Activated CD8-positive, alpha-beta memory T cell treated with anti-CD3 and anti-CD28 coated beads, Interleukin-2, amount 10 ng/mL, durations not matched to agents 7 days and 5 days (primary cell): ENCODE measurements at regions of chr17 and their contacts with region 1.

Region 1: DNA sequence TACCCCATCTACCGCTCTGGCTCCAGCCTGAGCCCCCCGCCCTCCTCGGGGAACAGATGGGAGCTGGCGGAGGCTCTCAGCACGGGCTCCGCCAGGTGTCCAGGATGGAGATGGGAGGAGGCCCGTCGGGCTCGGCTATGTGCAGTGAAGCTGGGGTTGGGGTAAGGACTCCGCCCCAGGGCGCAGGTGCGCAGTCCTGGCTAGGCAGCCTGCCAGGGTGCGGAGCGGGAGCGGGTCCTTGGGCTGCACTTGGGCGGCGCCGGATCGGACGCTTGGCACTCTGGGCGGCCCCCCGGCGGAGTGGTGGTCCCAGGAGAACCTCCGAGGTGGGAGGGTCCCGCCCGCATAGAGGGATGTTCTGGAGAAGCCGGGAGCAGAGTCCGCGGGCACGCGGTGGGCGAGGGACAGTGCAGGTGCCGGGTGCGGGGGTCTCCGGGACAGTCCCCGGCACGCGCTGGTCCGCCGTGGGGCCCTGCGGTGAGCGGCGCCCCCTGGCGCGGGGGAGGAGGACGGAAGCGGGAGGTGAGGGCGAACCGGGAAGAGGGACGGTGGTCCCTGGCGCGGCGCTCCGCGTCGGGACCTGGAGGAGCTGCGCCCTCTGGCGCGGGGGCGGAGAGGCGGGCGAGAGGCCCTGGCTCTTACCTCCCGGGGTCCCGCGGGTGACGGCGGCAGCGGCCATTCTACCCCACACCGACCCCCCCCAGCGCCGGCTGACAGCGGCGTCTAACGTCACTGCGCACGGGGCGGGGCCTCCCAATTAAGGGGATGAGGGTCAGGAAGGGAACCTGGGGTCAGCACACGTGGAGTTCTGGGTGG is at the start of gene CAMTA2:
- DNase-seq: peak; percentile 93
- ATAC-seq: peak; percentile 88
- H3K4me3 Mint-ChIP-seq: peak within 1 kb of the TSS; percentile 91
- H3K27ac Mint-ChIP-seq: peak within 1 kb of the TSS; percentile 93
- H3K4me1 Mint-ChIP-seq: peaks cover 36% of the 10 kb centered on the region
- H3K27me3 Mint-ChIP-seq: no peaks in the 10 kb centered on the region
- total RNA-seq, gene CAMTA2: 60.6 to 72.5 TPM

Region 2: DNA sequence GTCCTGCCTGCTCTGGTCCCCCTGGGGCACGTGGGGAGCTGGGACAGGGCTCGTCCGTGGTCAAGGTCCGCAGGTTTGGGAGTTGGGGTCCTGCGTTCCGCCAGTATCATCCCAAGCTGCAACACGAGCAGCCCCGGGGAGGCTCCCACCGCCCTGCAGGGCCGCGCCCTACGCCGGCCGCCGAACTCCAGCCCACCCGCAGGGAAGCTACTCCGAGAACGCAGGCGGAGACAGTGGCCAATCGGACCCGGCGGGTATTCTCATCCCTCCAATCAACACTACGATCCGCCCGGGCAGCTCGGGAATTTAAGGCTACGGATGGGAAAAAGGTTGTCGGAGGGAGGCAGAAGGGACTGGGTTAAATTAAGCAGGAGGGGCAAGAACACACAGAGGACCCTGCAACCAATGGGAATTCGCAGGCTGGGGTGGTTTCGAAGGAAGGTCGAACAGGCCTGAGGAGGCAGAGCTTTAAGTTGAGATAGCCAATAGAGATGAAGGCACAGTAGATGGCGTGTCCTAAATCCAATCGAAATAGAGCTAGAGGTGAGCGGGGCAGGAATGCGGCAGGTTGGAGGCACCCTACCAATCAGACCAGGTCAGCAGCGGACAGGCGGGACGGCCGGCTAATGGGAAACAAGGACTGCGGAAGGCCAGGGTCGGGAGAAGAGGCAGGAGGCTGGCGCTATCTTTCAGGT is 20.2 kb before region 1 on chr17:
- CTCF ChIA-PET with region 1: interaction called, 39 read pairs
- DNase-seq: peak; percentile 99
- ATAC-seq: peak; percentile 89
- H3K4me3 Mint-ChIP-seq: no peak overlapping the region
- H3K27ac Mint-ChIP-seq: no peak overlapping the region
- H3K4me1 Mint-ChIP-seq: peaks cover 36% of the 10 kb centered on the region
- H3K27me3 Mint-ChIP-seq: no peaks in the 10 kb centered on the region

Region 3: DNA sequence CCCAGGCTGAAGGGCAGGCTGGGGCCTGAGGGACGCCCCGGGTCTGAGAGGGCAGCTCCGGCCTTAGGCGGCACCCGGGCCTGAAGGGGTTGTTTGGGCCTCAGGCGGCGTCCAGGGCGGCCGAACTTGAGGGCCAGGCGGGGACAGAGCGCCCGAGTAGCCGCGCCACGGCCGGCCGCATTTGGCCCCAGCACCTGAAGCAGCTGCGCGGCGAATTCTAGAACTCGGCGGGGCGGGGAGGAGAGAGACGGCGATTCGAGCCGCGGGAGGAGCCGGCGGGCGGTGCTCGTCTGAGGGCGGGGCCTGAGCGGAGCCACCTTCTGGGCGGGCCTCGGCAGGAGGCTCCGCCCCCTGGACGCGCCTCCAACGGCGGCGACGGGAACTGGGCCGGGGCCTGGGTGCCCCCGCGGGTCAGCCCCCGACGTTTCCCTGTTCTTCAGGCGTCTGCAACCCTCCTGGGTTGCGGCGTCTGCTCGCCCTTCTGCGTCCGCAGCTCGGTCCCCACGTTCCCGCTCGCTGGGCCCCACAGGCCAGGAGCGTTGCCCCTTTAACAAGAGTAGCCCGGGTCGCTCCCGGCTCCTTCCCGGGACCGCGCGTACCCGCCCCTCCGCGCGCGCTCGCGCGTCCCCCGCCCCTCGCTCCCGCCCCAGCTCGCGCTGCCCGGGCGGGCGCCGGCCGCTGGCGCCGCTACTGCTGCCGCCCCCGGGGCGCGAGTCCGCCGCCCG is 10.3 kb after region 1 on chr17 and contains the starts of genes INCA1 and KIF1C:
- CTCF ChIA-PET with region 1: interaction called, 26 read pairs
- DNase-seq: peak; percentile 94
- ATAC-seq: peak; percentile 94
- H3K4me3 Mint-ChIP-seq: peak within 1 kb of the TSS; percentile 79
- H3K27ac Mint-ChIP-seq: peak within 1 kb of the TSS; percentile 72
- H3K4me1 Mint-ChIP-seq: peaks cover 16% of the 10 kb centered on the region
- H3K27me3 Mint-ChIP-seq: no peaks in the 10 kb centered on the region
- total RNA-seq, gene INCA1: 0.20 to 0.23 TPM
- total RNA-seq, gene KIF1C: 39.8 to 51.0 TPM

Region 4: DNA sequence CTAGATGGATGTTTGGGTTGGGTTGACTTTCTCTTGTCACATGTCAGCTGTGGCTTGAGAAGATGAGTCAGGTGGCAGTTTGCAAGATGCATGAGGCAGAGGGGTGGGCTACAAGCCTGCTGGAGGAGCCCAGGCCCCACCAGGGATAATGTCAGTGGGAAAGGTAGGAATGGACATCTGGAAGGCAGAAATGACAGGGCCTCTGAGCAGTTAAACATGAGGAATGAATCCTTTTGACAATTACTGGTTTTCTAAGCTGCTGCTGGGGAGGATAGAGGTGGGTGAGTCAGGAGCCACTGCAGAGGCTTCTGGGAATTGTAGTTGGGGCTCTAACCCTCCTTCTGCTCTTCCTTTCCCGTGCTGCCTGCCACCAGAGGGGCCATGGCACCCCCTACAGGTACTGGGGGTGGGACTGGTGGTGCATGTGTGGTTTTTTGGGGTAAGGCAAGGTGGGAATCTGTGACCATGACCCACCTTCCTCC is 32.4 kb after region 1 on chr17:
- CTCF ChIA-PET with region 1: interaction called, 23 read pairs
- DNase-seq: peak; percentile 67
- ATAC-seq: peak; percentile 86
- H3K4me3 Mint-ChIP-seq: no peak overlapping the region
- H3K27ac Mint-ChIP-seq: peak overlapping the region; percentile 68
- H3K4me1 Mint-ChIP-seq: peaks cover 17% of the 10 kb centered on the region
- H3K27me3 Mint-ChIP-seq: no peaks in the 10 kb centered on the region

Region 5: DNA sequence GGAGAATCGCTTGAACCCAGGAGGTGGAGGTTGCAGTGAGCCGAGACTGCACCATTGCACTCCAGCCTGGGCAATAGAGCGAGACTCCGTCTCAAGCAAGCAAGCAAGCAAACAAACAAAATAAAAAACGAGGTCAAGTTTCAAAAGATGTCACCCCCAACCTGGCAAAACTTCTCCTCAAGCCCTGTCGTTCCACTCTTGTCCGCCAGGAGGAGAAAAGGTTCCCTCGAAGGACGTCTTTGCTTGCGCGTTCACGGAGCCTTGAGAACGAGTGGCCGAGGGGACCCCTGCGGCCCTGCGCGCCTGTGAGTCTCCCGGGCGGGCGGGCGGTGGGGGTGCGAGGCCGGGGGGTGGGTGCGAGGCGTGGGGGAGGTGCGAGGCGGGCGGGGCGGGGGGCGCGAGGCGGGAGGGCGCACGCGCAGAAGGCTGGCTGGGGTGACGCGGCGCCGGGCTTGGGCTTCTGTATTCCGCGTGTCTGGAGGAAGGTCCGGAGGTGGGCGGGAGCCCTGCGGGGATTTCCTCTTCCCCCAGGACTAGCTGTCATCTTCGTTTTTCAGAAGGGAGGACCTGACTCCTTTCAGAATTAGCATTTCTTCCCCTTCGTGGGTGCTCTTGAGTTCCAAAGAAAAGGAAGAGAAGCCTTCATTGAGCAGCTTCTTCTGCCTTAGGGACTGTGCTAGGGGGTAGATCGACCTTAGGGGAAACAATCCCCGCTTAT is 44.4 kb after region 1 on chr17:
- CTCF ChIA-PET with region 1: interaction called, 16 read pairs
- DNase-seq: peak; percentile 91
- ATAC-seq: peak; percentile 79
- H3K4me3 Mint-ChIP-seq: peak overlapping the region; percentile 80
- H3K27ac Mint-ChIP-seq: peak overlapping the region; percentile 93
- H3K4me1 Mint-ChIP-seq: peaks cover 25% of the 10 kb centered on the region
- H3K27me3 Mint-ChIP-seq: no peaks in the 10 kb centered on the region

Region 6: DNA sequence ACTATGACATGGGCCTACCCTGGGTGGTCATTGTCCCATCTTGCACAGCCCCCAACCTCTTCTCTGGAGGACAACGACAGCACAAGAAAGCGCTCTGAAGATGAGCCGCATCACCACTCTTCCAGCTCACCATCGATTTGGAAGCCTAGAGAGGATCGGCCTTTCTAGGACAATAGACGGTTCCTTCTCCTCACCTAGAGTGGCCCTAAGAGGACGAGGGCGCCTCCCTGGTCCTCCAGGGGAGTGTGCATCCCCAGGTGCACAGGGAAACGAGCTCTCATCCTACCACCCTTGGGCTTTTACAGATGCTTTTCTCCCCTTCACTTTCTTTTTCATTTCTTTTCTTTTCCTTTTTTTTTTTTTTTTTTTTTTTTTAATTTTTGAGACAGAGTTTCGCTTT is 68.4 kb after region 1 on chr17:
- CTCF ChIA-PET with region 1: interaction called, 20 read pairs
- DNase-seq: no peak
- ATAC-seq: no peak
- H3K4me3 Mint-ChIP-seq: no peak overlapping the region
- H3K27ac Mint-ChIP-seq: no peak overlapping the region
- H3K4me1 Mint-ChIP-seq: peaks cover 2% of the 10 kb centered on the region
- H3K27me3 Mint-ChIP-seq: no peaks in the 10 kb centered on the region